Ascending aorta (tissue), 2 donors: ENCODE measurements at regions of chr5 and their contacts with region 1.

Region 1: GRCh38 chr5:54492178-54492577 is 25.4 kb upstream of the SNX18 start:
- DNase-seq: no peak
- H3K4me3 ChIP-seq: no peak overlapping the region
- H3K27ac ChIP-seq: no peak overlapping the region
- H3K4me1 ChIP-seq: no peaks in the 10 kb centered on the region
- H3K27me3 ChIP-seq: no peaks in the 10 kb centered on the region
- CTCF ChIP-seq: no peak

Region 2: GRCh38 chr5:54254482-54255198 is 237.5 kb before region 1 on chr5:
- intact Hi-C with region 1: loop called (anchors 5 kb)
- DNase-seq: no peak
- H3K4me3 ChIP-seq: peak overlapping the region; percentile 26 to 41
- H3K27ac ChIP-seq: no peak overlapping the region
- H3K4me1 ChIP-seq: peaks cover 0 to 4% of the 10 kb centered on the region in 2 donors
- H3K27me3 ChIP-seq: no peaks in the 10 kb centered on the region
- CTCF ChIP-seq: peak in 2 of 3 experiments; percentile 25 to 49

Region 3: GRCh38 chr5:54442271-54442670 is 49.9 kb before region 1 on chr5:
- intact Hi-C with region 1: loop called (anchors 1 kb)
- DNase-seq: no peak
- H3K4me3 ChIP-seq: no peak overlapping the region
- H3K27ac ChIP-seq: no peak overlapping the region
- H3K4me1 ChIP-seq: peaks cover 0 to 2% of the 10 kb centered on the region in 2 donors
- H3K27me3 ChIP-seq: no peaks in the 10 kb centered on the region
- CTCF ChIP-seq: no peak